ENCODE measurements at regions of chr14 and their contacts with region 1.

Region 1: DNA sequence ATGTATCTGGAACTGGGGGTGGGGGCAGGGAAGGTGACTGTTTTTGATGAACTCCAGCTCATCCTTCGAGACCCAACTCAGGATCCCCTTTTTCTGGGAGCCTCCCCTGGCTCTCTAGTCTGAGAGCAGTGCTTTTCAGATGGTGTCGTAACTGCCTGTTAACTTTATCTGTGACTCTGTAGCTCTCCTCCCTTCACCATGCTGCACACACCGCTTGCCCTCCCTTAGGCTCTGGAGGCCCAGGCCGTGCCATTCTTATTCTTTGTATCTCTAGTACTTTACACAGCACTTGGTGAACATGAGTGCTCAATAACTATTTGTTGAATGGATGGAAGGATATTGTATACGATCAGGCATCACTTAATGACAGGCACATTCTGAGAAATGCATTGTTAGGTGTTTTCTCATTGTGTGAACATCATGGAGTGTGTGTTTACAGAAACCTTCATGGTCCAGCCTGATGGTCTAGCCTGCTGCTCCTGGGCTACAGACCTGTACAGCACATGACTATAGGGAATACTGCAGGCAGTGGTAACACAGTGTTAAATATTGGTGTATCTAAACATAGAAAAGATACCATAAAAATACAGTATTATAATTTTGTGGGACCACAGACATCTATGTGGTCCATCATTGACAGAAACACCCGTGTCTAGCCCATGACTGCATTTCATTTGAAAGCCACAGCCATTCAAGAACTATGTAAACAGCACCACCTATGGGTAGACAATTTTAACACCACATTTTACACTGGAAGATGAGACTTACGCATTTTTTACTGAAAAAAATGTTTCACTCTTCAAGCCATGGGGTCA is 91.8 kb downstream of the EML1 start:
- DNase-seq: no peak
- H3K4me3 Mint-ChIP-seq: no peak overlapping the region
- H3K27ac Mint-ChIP-seq: no peak overlapping the region
- H3K4me1 Mint-ChIP-seq: no peaks in the 10 kb centered on the region
- H3K27me3 Mint-ChIP-seq: peaks cover 25% of the 10 kb centered on the region

Region 2: DNA sequence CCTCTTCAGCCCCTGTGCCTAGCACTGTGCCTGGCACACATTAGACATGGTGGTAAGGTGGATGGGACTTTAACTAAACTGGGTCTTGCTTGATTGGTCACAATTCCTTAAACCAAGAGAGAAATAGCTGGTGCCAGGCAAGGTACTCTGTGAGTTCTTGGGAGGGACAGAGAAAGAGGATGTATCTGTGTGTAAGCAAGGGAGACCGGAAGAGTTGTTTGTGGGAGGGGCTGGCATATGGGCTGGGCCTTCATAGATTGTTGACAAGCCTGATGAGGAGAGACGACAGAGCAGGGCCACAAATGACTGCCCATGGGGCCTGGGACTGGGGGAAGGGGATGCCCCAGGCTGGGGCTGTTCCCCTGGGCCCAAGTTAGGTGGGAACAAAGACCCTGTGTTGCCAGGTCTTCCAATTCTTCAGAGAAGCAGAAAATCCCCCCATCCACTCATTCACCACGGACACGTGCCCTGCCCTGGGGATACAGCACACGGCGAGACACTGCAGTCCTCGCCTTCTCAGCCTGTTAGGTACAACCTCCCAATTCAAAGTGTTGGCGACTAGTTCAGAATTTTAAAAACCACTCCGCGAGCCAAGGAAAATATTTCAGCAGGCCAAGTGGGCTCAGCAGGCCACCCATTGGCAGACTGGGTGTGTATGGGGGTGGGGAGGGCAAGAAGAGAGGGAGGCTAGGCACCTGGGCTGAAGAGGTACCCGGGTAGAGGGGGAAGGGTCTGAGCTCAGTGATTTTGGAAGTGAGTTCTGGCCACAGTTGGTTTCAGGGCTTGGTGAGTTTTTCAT is 212.3 kb before region 1 on chr14:
- CTCF ChIA-PET with region 1: no interaction called
- DNase-seq: peak; percentile 60
- H3K4me3 Mint-ChIP-seq: no peak overlapping the region
- H3K27ac Mint-ChIP-seq: peak overlapping the region; percentile 89
- H3K4me1 Mint-ChIP-seq: peaks cover 21% of the 10 kb centered on the region
- H3K27me3 Mint-ChIP-seq: peaks cover 63% of the 10 kb centered on the region

Region 3: DNA sequence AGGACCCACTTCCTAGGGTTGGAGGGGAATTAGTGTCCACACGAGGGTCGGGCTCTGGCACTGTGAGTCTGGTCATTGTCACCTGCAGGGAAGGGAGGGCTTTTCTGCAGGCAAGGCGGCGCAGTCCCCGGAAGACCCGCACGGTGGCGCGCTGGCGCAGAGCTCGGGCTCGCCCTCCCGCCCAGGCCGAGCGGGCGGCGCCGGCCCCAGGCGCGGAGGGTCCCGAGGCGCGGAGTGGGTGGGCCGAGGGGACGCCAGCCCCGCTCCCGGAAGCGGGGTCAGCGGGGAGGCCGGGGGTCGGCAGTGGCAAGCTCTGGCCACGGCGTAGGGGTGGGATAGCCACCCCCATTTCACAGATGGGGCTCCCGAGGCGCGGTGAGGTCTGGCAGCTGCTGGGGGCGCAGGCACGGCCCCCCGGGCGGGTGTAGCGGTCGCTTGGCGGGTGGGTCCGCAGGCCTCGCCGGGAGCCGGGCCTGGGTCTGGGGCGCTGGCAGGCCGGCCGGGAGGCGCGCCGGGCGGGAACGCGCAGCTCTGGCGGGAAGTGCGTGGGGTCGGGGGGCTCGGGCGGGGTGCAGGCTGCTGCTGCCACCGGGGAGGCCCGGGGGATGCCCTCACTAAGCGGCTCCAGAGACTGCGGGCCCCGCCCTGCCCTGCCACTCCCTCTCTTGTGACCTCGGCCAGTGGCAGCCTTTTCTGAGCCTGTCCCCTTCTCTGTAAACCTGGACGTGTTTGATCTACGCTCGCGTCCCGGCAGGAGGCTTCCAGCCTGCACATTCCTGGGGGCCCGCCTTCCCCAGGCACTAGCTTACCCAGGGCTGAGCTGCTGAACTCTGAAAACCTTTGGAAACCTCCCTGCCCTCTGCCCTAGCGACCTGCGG is 154.8 kb before region 1 on chr14:
- CTCF ChIA-PET with region 1: interaction called, 29 read pairs
- DNase-seq: peak; percentile 78
- H3K4me3 Mint-ChIP-seq: peak overlapping the region; percentile 26
- H3K27ac Mint-ChIP-seq: no peak overlapping the region
- H3K4me1 Mint-ChIP-seq: peaks cover 2% of the 10 kb centered on the region
- H3K27me3 Mint-ChIP-seq: peaks cover 76% of the 10 kb centered on the region